ENCODE measurements at regions of chr13 and their contacts with region 1.

Region 1: DNA sequence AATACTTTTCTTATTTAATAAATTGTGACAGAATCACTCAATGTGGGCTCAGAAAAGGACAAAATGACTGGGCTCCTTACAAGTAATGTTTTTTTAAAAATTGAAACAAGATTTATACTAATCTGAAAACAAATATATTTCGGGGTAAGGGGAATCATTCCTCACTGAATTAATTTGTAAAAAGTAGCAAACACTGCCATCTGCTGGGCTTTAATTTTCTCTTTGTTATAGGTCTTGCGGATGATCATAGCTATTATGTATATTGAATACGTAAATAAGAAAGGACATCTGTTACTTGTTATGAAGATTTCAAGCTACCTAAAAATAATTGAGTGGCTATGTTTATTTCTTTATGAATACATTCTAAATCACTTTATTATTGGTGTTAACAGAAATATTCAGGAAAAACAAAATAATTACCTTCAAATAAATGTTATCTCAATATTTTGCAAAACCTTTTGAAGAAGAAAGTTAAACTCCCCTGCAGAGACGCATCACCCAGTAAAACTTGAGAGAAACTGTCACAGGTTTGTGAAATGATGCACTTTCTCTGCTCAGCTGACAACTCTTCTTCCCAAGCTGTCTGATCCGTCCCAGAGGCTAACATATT is 17.8 kb upstream of the ENOX1 start:
- DNase-seq: no peak
- ATAC-seq: peak; percentile 48

Region 2: GRCh38 chr13:42602906-42603305 is 1201.7 kb before region 1 on chr13:
- intact Hi-C with region 1: loop called (anchors 10 kb)
- DNase-seq: no peak
- ATAC-seq: no peak

Region 3: GRCh38 chr13:43085545-43085944 is 719.0 kb before region 1 on chr13:
- intact Hi-C with region 1: loop called (anchors 10 kb)
- DNase-seq: no peak
- ATAC-seq: no peak